Activated naive CD8-positive, alpha-beta T cell treated with anti-CD3 and anti-CD28 coated beads, Interleukin-2, amount 10 ng/mL, durations not matched to agents 7 days and 5 days (primary cell): ENCODE measurements at regions of chr22 and their contacts with region 1.

Region 1: GRCh38 chr22:30245985-30246901 is at the start of gene LIF:
- DNase-seq: peak; percentile 79
- ATAC-seq: peak; percentile 31
- H3K4me3 Mint-ChIP-seq: peak within 1 kb of the TSS; percentile 100
- H3K27ac Mint-ChIP-seq: peak within 1 kb of the TSS; percentile 99
- H3K4me1 Mint-ChIP-seq: peaks cover 55% of the 10 kb centered on the region
- H3K27me3 Mint-ChIP-seq: no peaks in the 10 kb centered on the region
- total RNA-seq, gene LIF: 508 to 564 TPM

Region 2: DNA sequence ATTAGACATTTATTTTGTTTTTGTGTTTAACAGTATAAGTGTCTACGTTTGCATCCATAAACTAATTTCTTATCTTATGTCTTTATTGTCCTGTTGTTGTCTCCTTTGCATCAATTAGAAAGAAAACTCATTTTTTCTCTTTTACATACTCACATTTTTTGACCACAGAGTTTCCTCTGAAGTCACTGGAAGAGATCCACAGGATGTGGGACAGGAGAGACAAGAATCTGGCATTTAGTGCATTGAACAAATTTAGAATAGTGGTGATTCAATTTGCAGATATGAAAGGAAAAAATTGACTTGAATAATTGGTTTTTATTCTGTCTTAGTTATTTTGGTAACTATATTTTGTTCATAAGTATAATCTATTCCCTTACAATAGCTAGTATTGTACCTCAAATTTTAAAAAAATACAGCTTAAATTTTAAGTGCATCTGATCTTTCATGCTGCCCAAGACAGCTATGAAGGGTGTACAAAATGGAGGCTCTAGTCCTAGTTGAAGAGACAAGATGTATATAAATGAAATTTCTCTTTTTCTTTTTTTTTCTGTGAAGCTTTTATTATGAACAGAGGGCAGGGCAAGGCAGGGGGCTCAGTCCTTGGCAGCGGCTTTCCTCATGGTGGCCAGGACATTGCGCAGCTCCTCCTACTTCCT is 141.6 kb before region 1 on chr22:
- POLR2A ChIA-PET with region 1: interaction called, 140 read pairs
- DNase-seq: no peak
- ATAC-seq: peak; percentile 69
- H3K4me3 Mint-ChIP-seq: peak overlapping the region; percentile 71
- H3K27ac Mint-ChIP-seq: peak overlapping the region; percentile 82
- H3K4me1 Mint-ChIP-seq: peaks cover 47% of the 10 kb centered on the region
- H3K27me3 Mint-ChIP-seq: no peaks in the 10 kb centered on the region

Region 3: DNA sequence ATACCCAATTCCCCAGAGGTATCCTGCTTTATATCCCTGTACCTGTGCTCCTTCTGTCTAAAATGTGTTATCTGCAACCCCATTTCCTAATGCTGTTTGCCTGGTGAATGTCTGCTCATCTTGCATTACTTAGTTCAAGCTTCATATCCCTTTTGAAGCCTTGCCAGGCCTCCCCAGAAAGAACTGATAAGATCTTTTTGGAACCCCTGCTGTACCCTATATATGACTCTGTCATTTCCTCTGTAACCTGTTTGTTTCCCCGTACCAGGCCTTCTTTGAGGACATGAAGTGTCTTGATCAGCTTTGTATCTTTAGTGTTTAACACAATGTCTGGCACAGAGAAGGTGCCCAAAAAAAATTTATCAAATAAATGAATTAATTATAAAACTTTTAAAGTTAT is 77.2 kb before region 1 on chr22:
- POLR2A ChIA-PET with region 1: interaction called, 116 read pairs
- DNase-seq: no peak
- ATAC-seq: peak; percentile 78
- H3K4me3 Mint-ChIP-seq: no peak overlapping the region
- H3K27ac Mint-ChIP-seq: no peak overlapping the region
- H3K4me1 Mint-ChIP-seq: peaks cover 26% of the 10 kb centered on the region
- H3K27me3 Mint-ChIP-seq: no peaks in the 10 kb centered on the region

Region 4: DNA sequence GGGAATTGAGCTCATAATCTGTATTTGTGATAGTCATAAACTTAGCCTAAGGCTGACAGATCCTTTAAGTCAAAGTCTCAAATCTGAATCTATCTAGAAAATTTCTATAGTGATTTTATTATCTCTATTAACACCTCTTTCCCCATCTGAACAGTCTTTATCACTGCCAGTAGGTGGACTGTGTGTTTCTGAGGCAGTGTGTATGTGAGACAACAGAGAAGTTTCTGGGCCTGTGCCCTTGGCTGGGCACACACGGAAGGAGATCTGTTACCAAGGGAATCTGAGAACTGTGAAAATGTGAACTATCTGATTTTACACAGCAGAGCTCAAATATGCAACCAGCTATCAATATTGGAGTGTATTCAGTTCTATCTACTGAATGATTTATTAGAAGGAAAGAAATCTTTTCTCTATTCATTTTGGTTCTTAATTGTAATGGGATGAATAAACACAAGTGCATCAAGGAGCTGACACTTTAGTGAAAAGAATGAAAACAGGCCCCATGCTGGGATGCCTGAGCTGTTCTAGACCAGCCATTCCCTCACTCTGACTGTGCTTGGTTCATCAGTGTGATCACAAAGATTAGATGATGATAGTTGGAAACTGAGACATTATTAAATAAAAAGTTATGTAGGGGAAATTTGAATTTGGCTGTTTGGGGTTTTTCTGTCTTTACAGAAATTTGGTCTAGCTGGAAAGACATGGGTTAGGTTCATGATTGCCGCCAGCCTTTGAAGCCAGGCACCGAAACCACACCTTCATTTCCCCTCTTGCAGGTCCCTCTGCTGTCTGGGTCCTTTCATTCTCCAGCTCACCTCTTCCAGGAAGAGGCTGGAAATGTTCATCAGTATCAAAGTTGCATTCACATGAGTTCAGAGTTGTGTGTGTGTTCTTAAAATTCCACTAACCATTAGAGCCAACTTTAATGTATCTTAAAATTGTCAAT is 67.8 kb before region 1 on chr22:
- POLR2A ChIA-PET with region 1: interaction called, 140 read pairs
- DNase-seq: peak; percentile 48
- ATAC-seq: peak; percentile 74
- H3K4me3 Mint-ChIP-seq: peak overlapping the region; percentile 61
- H3K27ac Mint-ChIP-seq: peak overlapping the region; percentile 93
- H3K4me1 Mint-ChIP-seq: peaks cover 78% of the 10 kb centered on the region
- H3K27me3 Mint-ChIP-seq: no peaks in the 10 kb centered on the region

Region 5: GRCh38 chr22:30183861-30184278 is 62.4 kb before region 1 on chr22:
- POLR2A ChIA-PET with region 1: interaction called, 247 read pairs
- DNase-seq: no peak
- ATAC-seq: peak; percentile 79
- H3K4me3 Mint-ChIP-seq: peak overlapping the region; percentile 64
- H3K27ac Mint-ChIP-seq: peak overlapping the region; percentile 95
- H3K4me1 Mint-ChIP-seq: peaks cover 84% of the 10 kb centered on the region
- H3K27me3 Mint-ChIP-seq: no peaks in the 10 kb centered on the region

Region 6: GRCh38 chr22:30224161-30224857 is 21.9 kb before region 1 on chr22:
- POLR2A ChIA-PET with region 1: interaction called, 219 read pairs
- DNase-seq: no peak
- ATAC-seq: no peak
- H3K4me3 Mint-ChIP-seq: peak overlapping the region; percentile 23
- H3K27ac Mint-ChIP-seq: peak overlapping the region; percentile 97
- H3K4me1 Mint-ChIP-seq: peaks cover 91% of the 10 kb centered on the region
- H3K27me3 Mint-ChIP-seq: no peaks in the 10 kb centered on the region

Region 7: DNA sequence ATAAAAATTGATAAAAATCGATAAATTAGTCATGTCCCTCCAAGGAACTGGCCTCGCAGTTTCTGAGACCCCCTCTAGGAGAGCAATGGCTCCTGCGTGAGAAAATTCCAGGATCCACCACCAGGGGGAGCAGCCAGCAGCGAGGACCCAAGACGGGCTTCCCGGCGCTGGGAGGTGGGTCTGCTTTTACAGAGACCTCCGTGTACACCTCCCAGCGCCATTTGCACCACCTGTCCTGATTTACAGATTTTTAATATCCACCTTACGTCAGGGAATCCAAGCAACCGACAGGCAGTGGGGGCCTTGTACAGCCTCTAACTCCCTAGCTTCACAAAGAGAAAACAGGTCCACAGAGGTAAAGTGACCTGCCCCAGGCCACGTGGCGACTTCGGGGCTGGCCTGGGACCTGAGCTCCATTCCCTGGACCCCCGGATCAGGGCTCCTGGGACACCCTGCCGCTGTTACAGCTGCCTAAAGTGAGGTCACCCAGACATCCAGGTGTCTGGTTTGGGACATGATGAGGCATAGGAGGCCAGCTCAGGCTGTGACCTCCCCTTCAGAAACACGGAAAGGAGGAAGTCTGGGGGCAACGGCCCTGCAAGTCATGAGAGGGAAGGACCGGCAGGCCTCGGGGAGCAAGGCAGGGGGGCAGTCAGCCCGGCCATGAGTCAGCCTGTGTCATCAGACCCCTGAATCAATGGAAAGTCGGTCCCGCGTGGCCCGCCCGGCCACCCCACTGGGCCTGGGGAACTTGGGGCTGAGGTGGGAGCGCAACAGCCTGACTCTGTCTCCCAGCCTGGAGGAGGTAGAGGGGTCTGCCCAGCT is 16.9 kb after region 1 on chr22:
- POLR2A ChIA-PET with region 1: interaction called, 91 read pairs
- DNase-seq: peak; percentile 83
- ATAC-seq: no peak
- H3K4me3 Mint-ChIP-seq: peak overlapping the region; percentile 88
- H3K27ac Mint-ChIP-seq: peak overlapping the region; percentile 97
- H3K4me1 Mint-ChIP-seq: peaks cover 51% of the 10 kb centered on the region
- H3K27me3 Mint-ChIP-seq: no peaks in the 10 kb centered on the region